ENCODE measurements at regions of chr11 and their contacts with region 1.

Region 1: DNA sequence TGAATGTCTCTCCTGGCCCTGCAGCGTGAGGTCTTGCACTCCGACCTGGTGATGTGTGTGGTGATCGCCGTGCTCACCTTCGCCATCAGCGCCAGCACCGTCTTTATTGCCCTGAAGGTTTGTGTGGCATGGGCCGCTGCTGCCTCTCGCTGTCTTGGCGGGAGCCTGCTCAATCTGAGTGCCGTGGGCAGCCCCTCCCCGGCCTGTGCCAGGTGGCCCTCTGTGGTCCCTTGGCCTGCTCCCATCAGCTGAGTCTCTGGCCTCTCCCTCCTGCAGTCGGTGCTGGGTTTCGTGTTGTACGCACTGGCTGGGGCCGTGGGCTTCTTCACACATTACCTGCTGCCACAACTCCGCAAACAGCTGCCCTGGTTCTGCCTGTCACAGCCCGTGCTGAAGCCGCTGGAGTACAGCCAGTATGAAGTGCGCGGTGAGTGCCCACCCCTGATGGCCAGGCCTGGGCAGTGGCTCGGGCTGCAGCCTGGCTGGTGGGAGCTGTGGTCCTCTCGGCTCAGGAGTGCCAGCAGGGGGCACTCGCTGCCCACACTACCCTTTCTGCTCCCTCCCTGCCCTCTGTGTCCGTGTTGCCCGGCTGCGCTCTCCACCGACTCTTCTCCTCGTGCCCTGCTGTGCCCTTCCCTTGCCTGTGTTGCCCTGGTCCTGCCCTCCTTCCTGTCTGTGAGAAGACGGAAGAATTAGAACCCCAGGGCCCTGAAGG is 10.2 kb downstream of the PCNX3 start:
- DNase-seq: no peak
- H3K4me3 ChIP-seq: no peak overlapping the region
- H3K27ac ChIP-seq: no peak overlapping the region
- H3K4me1 ChIP-seq: peaks cover 0 to 5% (median 2%) of the 10 kb centered on the region in 4 donors
- H3K27me3 ChIP-seq: no peaks in the 10 kb centered on the region
- CTCF ChIP-seq: peak; percentile 25 to 58 (median 56)
- EP300 ChIP-seq: no peak
- POLR2A ChIP-seq: no peak

Region 2: GRCh38 chr11:65595543-65596281 is 30.1 kb before region 1 on chr11 and contains the start of gene KCNK7:
- intact Hi-C with region 1: no loop called
- DNase-seq: no peak
- H3K4me3 ChIP-seq: no peak within 1 kb of the TSS
- H3K27ac ChIP-seq: peak within 1 kb of the TSS in 1 of 4 donors; percentile 18
- H3K4me1 ChIP-seq: peaks cover 0 to 24% (median 24%) of the 10 kb centered on the region in 4 donors
- H3K27me3 ChIP-seq: no peaks in the 10 kb centered on the region
- CTCF ChIP-seq: no peak
- EP300 ChIP-seq: no peak
- POLR2A ChIP-seq: no peak
- total RNA-seq, gene KCNK7: 0.54 to 0.71 TPM in 2 of 4 donors, not detected in the others

Region 3: DNA sequence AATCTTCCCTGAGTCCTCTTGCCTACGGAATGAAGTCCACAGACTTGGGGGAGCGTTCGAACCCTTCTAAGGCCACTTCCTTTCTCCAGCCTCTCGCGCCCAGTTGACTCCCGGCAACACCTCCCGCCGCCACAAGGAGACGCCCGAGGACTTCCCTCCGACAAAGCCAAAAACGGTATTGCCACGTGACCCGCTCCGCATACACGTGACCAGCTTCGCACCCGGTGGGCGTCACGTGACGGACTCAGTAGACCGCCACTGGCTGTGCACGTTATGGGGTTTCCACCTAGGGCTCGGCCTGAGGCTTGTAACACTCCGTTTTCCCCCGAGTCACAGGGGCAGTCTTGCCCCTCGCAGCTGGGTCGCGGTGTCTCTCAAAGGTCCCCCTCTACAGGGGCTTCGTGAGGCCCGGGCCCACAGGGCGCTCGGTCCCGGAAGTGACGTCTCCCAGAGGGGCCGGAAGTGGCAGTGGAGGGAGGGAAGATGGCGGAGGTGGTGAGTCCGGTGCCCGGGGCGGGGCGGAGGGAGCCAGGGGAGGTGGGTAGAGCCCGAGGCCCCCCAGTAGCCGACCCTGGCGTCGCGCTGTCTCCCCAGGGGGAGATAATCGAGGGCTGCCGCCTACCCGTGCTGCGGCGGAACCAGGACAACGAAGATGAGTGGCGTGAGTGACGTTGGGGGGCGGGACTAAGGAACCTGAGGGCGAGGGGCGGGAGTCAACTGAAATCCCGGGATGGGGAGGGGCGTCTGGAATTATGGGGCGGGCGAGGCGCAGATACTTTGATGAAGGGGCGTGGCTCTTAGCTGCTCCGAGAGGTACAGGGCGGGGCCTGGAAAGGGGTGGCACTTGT is 86.2 kb after region 1 on chr11 and contains the start of gene KAT5:
- intact Hi-C with region 1: loop called (anchors 5 kb)
- DNase-seq: peak; percentile 100
- H3K4me3 ChIP-seq: peak within 1 kb of the TSS; percentile 59 to 83 (median 70)
- H3K27ac ChIP-seq: peak within 1 kb of the TSS; percentile 92 to 100 (median 98)
- H3K4me1 ChIP-seq: peaks cover 0 to 22% (median 19%) of the 10 kb centered on the region in 4 donors
- H3K27me3 ChIP-seq: no peaks in the 10 kb centered on the region
- CTCF ChIP-seq: peak; percentile 94 to 100 (median 100)
- EP300 ChIP-seq: no peak
- POLR2A ChIP-seq: peak; percentile 88 to 91
- total RNA-seq, gene KAT5: 58.4 to 92.7 (median 74.7) TPM

Region 4: DNA sequence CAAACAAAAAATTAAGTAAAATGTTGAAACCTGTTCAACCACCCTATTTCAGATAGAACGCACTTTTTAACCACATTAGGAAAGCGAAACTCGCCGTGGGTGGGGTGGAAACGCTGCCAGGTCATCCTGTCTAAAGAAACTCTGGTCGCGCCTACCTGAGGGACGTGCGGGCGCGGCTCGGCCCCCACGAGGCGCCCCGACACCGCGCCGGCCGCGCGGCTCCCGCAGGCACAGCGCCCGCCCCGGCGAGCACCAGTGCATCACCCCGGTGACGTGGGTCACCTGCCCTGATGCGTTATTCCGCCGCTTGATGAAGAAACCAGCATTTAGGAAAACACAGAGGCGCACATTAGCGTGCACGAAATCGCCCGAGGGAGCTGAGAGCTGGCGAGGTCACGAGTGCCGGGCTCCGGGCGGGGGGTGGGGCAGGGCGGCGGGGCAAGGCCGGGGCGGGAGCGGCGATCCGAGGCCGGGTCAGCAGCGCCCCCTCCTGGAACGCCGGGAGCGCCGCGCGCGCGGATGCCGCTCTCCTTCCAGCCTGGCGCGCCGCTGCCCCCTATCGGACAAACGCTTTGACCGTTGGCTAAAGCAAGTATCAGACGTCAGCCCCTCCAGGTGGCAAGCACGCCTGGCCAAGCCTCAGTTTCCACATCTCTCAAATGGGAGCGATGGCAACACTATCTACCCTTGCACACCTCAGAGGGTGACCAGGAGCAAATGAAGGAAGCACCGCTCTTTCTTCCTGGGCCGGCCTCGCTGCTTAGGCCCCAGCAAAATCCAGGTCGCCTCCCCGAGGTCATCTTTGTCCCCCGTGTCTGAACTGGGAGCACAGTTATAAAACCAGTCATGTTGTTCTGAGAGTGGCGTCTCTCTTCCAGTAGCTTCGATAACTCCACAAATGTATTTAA is 192.3 kb after region 1 on chr11:
- intact Hi-C with region 1: loop called (anchors 10 kb)
- DNase-seq: peak; percentile 95
- H3K4me3 ChIP-seq: peak overlapping the region; percentile 29 to 65 (median 60)
- H3K27ac ChIP-seq: peak overlapping the region; percentile 64 to 74 (median 72)
- H3K4me1 ChIP-seq: peaks cover 0 to 12% (median 8%) of the 10 kb centered on the region in 4 donors
- H3K27me3 ChIP-seq: no peaks in the 10 kb centered on the region
- CTCF ChIP-seq: peak; percentile 85 to 100 (median 94)
- EP300 ChIP-seq: no peak
- POLR2A ChIP-seq: no peak